ENCODE measurements at regions of chr3 and their contacts with region 1.

Region 1: DNA sequence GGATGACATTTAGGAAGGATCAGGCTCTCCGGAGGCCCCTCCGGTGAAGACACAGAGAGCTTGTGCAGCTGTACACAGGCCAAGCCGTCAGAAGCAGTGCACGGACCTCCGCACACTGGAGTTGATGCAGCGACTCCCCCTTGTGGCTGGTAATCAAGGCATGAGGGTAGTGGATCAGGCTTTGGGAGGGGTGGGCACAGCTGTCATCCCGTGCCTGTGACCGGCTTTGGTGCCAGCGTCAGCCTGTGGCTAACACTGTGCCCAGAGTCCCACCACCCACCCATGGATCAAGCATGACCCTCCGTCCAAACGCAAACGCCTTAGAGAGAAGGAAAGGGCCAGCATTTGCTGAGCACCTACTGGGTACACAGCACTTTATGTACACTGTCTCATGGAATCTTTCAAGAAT is 8.2 kb upstream of the GRIP2 start:
- DNase-seq: peak; percentile 55
- ATAC-seq: peak; percentile 80
- H3K4me3 Mint-ChIP-seq: no peak overlapping the region
- H3K27ac Mint-ChIP-seq: no peak overlapping the region
- H3K4me1 Mint-ChIP-seq: no peaks in the 10 kb centered on the region
- H3K27me3 Mint-ChIP-seq: peaks cover 18% of the 10 kb centered on the region

Region 2: GRCh38 chr3:14488563-14489041 is 59.7 kb before region 1 on chr3:
- CTCF ChIA-PET with region 1: no interaction called
- POLR2A ChIA-PET with region 1: no interaction called
- DNase-seq: no peak
- ATAC-seq: no peak
- H3K4me3 Mint-ChIP-seq: no peak overlapping the region
- H3K27ac Mint-ChIP-seq: peak overlapping the region; percentile 6
- H3K4me1 Mint-ChIP-seq: no peaks in the 10 kb centered on the region
- H3K27me3 Mint-ChIP-seq: no peaks in the 10 kb centered on the region

Region 3: DNA sequence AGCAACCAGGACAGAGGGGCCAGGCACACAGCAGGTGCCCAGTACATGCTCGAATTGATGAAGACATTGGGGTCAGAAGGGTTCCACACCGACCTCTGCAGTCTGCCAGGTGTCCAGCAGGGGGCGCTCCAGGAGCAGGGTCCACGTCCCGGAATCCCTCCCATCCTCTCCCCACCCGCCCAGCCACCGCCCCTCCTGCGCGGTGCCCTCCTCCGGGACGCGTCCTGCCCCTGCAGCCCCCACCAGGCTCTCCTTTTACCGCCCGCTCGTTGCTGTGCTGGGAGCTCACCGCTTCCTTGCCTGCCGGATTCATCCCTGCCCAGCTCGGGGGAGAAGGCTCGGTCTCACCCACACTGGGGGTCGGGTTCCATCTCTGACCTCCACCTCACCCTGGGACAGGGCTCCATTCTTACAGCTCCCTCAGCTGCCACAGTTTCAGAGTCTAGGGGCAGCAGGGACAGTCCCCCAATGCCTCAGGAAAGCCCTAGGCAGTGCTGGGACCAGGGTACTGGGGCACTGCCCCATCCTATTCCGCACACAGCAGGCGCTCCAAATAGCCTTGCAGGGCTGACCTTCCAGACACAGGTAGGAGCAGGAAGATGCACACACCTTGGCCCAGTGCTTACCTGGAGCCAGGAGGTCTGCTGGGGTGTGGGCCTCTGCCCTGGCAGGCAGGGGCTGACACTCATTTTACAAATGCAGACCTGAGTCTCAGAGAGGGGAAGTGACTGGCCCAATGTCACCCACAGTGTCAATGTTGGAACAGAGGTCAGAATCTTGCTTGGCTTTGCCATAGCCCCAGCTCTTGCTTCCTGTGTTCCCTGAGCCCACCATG is 39.1 kb before region 1 on chr3:
- CTCF ChIA-PET with region 1: interaction called, 13 read pairs
- POLR2A ChIA-PET with region 1: no interaction called
- DNase-seq: peak; percentile 81
- ATAC-seq: peak; percentile 74
- H3K4me3 Mint-ChIP-seq: no peak overlapping the region
- H3K27ac Mint-ChIP-seq: no peak overlapping the region
- H3K4me1 Mint-ChIP-seq: no peaks in the 10 kb centered on the region
- H3K27me3 Mint-ChIP-seq: no peaks in the 10 kb centered on the region

Region 4: GRCh38 chr3:14623569-14624051 is 75.3 kb after region 1 on chr3:
- CTCF ChIA-PET with region 1: no interaction called
- POLR2A ChIA-PET with region 1: no interaction called
- DNase-seq: no peak
- ATAC-seq: no peak
- H3K4me3 Mint-ChIP-seq: no peak overlapping the region
- H3K27ac Mint-ChIP-seq: no peak overlapping the region
- H3K4me1 Mint-ChIP-seq: no peaks in the 10 kb centered on the region
- H3K27me3 Mint-ChIP-seq: peaks cover 13% of the 10 kb centered on the region